ENCODE measurements at regions of chr15 and their contacts with region 1.

Region 1: GRCh38 chr15:97748576-97748975 is 211.9 kb upstream of the ARRDC4 start:
- DNase-seq: no peak
- ATAC-seq: no peak
- H3K4me3 ChIP-seq: no peak overlapping the region
- H3K27ac ChIP-seq: no peak overlapping the region
- H3K4me1 ChIP-seq: no peaks in the 10 kb centered on the region
- H3K27me3 ChIP-seq: no peaks in the 10 kb centered on the region
- CTCF ChIP-seq: no peak
- POLR2A ChIP-seq: no peak
- RAD21 ChIP-seq: no peak

Region 2: DNA sequence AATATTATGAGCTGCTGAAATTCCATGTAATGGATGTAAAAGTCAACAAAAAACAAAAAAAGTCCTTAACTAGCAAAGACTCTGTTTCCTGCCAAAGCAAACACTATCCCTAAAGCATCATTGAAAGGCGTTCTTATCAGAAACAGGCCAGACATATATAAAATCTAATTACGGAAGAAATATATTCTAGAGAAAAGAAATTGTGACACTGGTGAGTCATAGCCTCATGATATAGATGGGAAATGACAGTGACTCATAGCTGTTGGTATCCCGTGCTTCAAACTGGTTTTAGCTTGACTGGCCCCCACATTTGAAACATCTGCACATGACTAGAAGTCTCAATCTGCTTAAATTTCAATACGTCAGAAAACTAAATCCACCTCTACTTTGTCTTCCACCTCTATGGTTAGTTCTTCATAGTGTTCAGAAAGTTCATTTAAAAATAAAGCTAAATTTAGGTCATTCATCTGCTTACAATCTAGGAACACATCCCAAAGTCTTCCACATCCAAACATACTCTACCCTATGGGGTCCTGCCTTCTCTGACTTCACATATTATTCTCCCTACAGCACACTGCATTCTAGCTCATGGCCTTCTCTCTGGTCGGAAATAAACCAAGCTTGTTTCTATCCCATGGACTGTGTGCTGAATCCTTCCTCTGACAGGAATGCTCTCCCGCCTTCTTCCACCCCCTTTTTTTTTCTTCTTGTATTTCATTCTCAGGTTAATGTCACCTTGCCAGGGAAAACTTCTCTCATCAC is 244.4 kb before region 1 on chr15:
- CTCF ChIA-PET with region 1: no interaction called
- POLR2A ChIA-PET with region 1: interaction called, 14 read pairs
- dilution Hi-C with region 1: no loop called
- in situ Hi-C with region 1: no loop called
- intact Hi-C with region 1: no loop called
- DNase-seq: peak; percentile 0
- ATAC-seq: no peak
- H3K4me3 ChIP-seq: no peak overlapping the region
- H3K27ac ChIP-seq: no peak overlapping the region
- H3K4me1 ChIP-seq: no peaks in the 10 kb centered on the region
- H3K27me3 ChIP-seq: no peaks in the 10 kb centered on the region
- CTCF ChIP-seq: no peak
- POLR2A ChIP-seq: no peak
- RAD21 ChIP-seq: no peak

Region 3: DNA sequence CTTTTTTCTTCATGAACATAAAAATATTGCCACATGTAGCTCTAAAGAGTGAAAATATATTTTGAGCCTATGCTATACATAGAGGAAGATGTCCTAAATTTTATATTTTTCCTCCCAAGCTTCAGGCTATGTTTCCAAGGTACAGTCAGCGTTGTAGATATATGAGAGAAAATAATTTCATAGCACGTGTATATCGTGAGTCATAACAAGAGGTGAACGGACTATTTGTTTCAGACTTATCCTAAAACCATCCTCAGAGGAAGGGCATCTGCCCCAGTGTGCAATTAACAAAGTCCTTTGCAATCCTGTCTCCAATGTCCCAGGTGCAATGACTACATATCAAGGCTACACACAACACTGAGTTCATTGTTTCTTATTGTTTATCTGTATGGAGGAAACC is 34.7 kb after region 1 on chr15:
- CTCF ChIA-PET with region 1: no interaction called
- POLR2A ChIA-PET with region 1: no interaction called
- dilution Hi-C with region 1: no loop called
- in situ Hi-C with region 1: no loop called
- intact Hi-C with region 1: no loop called
- DNase-seq: no peak
- ATAC-seq: no peak
- H3K4me3 ChIP-seq: no peak overlapping the region
- H3K27ac ChIP-seq: no peak overlapping the region
- H3K4me1 ChIP-seq: no peaks in the 10 kb centered on the region
- H3K27me3 ChIP-seq: no peaks in the 10 kb centered on the region
- CTCF ChIP-seq: no peak
- POLR2A ChIP-seq: no peak
- RAD21 ChIP-seq: no peak

Measured in IMR-90 (cell line).